Psoas muscle (tissue), 8 donors: ENCODE measurements at regions of chr21 and their contacts with region 1.

Region 1: DNA sequence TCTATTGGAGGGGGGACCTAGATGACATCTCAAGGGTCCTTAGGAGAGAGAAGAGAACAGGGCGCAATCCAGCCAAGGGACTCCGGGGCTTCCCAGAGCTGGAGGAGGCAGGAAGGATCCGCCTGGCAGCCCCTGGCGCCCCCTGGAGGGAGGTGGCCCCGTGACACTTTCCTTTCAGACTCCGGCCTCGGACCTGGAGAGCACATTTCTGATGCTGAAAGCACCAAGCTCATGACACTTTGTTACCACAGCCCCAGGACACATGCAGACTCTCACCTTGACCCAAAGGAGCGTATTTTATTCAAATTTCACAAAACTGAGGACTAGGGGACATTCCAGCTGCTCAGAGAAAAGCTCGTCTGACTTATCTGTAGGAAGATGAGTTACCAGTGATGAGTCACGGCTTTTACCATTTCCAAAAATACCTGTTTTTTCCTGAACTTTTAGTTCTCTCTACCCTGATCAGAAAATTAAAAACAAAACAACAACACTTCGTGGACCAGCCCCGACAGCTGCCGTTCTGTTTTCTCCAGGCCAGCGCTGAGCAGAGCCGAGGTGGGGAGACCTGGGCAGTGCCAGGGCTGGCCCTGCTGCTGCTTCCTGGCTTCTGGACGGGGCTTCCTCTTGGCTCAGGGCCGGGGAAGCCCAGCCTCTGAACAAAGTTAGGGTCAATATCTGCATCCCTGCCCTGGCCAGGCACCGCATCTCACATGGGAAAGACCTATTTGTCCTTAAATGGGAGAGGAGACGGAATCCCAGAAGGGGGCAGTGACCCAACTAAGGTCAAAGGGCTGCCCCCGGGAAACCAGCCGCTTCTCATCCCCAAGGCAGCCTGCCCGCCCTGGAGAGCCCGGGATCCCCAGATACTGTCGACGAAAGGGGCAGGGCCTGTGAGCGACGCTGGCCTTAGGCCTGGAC is 21.6 kb upstream of the POFUT2 start:
- DNase-seq: peak; percentile 75 to 78
- ATAC-seq: peak; percentile 49 to 72 (median 58)
- H3K4me3 ChIP-seq: no peak overlapping the region
- H3K27ac ChIP-seq: peak overlapping the region; percentile 38
- H3K4me1 ChIP-seq: peaks cover 27% of the 10 kb centered on the region
- H3K27me3 ChIP-seq: peaks cover 0 to 57% (median 5%) of the 10 kb centered on the region in 3 donors
- CTCF ChIP-seq: peak; percentile 57

Region 2: GRCh38 chr21:45357436-45358260 is 48.3 kb after region 1 on chr21:
- intact Hi-C with region 1: loop called in 1 of 2 experiments (anchors 5 kb)
- DNase-seq: peak; percentile 39 to 75
- ATAC-seq: peak; percentile 17 to 77 (median 38)
- H3K4me3 ChIP-seq: no peak overlapping the region
- H3K27ac ChIP-seq: peak overlapping the region; percentile 73
- H3K4me1 ChIP-seq: no peaks in the 10 kb centered on the region
- H3K27me3 ChIP-seq: peaks cover 0 to 25% (median 6%) of the 10 kb centered on the region in 3 donors
- CTCF ChIP-seq: no peak